Endothelial cell of umbilical vein (primary cell): ENCODE measurements at regions of chr11 and their contacts with region 1.

Region 1: DNA sequence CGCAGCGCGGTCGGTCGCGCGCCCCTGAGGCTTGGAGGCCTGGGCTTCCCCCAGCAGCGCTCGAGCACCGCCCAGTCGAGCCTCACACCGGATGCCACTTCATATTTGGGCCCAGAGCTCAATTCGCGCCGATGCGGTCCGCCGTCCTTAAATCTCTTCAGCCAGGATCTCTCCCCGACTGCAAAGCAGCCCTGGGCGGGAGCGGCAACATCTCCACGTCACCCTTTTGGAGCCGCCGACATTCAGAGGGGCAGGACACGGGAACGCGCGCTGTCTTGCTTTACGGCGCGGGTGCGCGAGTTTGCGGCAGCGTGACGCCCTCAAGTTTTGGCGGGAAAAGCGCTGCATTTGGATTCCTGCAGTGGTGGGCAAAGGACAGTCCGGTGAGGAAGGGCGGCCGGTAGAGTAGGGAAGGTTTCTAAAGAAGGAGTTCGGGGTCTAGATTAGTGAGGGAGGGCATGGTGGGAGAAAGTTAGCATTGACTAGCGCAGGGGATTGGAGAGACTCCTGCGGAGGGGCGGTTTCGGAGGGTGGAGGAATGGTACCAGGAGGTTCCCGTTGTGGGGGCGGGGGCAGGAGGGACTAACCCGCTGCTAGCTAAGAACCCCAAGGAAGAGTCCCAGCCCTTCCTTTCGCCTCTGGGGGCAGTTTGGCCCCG is 796 bp downstream of the CHEK1 start:
- DNase-seq: peak; percentile 91
- H3K4me3 ChIP-seq: peak overlapping the region; percentile 24 to 91 (median 60)
- H3K27ac ChIP-seq: peak overlapping the region; percentile 49
- H3K4me1 ChIP-seq: peaks cover 27% of the 10 kb centered on the region
- H3K27me3 ChIP-seq: no peaks in the 10 kb centered on the region
- CTCF ChIP-seq: no peak
- POLR2A ChIP-seq: peak; percentile 71

Region 2: DNA sequence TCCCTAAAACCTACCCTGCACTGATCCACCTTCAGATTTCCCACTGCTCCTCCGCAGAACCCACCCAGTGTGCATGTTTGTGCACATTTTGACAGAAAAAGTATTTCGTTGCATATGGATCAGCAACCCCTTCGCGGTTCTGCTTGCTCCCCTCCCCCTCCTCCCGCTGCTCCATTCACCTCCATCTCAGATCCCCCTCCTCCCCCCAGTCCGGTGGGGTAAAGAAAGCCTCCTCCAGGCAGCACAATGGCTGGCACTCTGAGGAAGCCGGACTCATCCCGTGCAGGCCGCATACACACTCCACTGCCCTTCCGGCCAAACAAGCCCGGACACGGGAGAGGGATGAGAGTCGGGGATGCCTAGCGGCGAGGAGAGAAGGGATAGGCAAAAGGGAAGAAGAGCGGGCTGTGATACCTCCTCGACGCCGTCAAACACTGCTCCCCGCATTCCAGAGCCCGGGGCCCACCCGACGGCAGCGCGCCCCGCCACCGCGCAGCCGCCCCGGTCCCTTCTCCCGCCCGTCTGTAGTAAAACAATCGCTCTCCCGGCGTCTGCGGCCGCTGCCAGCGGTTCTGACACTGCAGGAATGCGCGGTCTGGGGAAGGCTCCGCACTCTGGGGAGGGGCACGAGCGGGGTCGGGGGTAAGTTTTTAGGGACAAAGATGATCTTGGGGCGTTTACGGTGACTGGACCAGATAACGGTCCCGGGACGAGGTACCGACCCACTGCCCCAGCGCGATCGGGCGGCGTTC is 130.6 kb before region 1 on chr11:
- CTCF ChIA-PET with region 1: no interaction called
- POLR2A ChIA-PET with region 1: no interaction called
- dilution Hi-C with region 1: no loop called
- intact Hi-C with region 1: loop called (anchors 5 kb)
- DNase-seq: peak; percentile 61
- H3K4me3 ChIP-seq: peak overlapping the region; percentile 52 to 73 (median 62)
- H3K27ac ChIP-seq: no peak overlapping the region
- H3K4me1 ChIP-seq: peaks cover 9% of the 10 kb centered on the region
- H3K27me3 ChIP-seq: peaks cover 0 to 2% of the 10 kb centered on the region in 2 experiments
- CTCF ChIP-seq: no peak
- POLR2A ChIP-seq: no peak

Region 3: DNA sequence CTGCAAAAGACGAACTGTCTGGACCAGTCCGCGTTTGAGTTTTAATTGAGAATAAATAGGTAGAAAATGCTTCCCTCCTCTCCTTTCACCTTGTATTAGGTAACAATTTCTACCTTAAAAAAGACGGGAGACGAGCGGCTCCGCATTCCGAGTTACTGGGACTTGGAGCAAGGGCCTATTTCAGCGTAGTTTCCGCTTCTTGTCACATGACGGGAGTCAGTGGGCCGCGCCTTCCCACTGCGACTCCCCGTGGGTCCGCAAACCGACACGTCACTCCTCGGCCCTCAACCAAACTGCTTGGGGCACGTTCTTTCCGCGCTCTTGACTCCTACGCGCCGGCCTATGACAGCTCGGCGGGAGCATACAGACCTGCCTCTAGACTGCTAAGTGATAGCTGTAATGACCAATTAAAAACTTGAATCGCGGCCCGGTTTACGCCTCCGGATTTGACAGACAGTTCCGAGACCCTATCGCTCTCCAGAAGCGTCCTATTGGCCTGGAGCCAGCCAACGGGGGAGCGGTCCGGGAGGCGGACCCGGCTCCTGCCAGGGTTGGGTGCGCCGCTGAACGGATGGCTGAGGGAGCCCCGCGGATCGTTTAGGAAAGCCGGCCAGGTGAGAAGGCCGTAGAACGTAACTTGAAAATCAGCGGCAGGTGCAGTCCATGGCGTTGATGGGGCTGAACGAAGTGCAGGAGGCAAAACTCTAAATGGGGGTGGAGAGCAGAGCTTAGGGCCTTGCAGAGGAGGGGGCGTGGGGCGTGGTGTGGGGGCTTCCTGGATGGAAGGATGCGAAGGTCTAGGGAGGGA is 33.2 kb before region 1 on chr11 and contains the start of gene STT3A:
- CTCF ChIA-PET with region 1: no interaction called
- POLR2A ChIA-PET with region 1: interaction called, 8 read pairs
- dilution Hi-C with region 1: no loop called
- intact Hi-C with region 1: loop called (anchors 1 kb)
- DNase-seq: peak; percentile 100
- H3K4me3 ChIP-seq: peak within 1 kb of the TSS; percentile 63 to 96 (median 79)
- H3K27ac ChIP-seq: peak within 1 kb of the TSS; percentile 79
- H3K4me1 ChIP-seq: peaks cover 17% of the 10 kb centered on the region
- H3K27me3 ChIP-seq: no peaks in the 10 kb centered on the region
- CTCF ChIP-seq: no peak
- POLR2A ChIP-seq: peak; percentile 92
- total RNA-seq, gene STT3A: 216 and 236 TPM in 2 replicates

Region 4: DNA sequence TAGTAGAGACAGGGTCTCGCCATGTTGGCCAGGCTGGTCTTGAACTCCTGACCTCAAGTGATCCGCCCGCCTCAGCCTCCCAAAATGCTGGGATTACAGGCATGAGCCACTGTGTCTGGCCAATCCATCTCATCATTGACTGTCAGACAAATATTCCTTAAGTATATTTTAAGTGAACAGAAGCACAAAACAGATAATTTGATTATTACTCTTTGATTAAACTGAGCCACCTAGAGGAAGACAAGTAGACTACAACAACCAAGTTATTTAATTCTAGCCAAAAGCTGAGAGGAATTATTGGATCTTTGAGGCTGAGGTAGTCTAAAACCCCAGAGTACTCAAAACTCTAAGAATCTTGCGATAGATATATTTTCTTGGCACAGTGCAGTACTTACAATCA is 53.6 kb after region 1 on chr11:
- CTCF ChIA-PET with region 1: interaction called, 44 read pairs
- POLR2A ChIA-PET with region 1: no interaction called
- dilution Hi-C with region 1: no loop called
- intact Hi-C with region 1: loop called (anchors 1 kb)
- DNase-seq: peak; percentile 30
- H3K4me3 ChIP-seq: no peak overlapping the region
- H3K27ac ChIP-seq: no peak overlapping the region
- H3K4me1 ChIP-seq: peaks cover 12% of the 10 kb centered on the region
- H3K27me3 ChIP-seq: no peaks in the 10 kb centered on the region
- CTCF ChIP-seq: peak in 1 of 2 donors; percentile 18
- POLR2A ChIP-seq: no peak

Region 5: DNA sequence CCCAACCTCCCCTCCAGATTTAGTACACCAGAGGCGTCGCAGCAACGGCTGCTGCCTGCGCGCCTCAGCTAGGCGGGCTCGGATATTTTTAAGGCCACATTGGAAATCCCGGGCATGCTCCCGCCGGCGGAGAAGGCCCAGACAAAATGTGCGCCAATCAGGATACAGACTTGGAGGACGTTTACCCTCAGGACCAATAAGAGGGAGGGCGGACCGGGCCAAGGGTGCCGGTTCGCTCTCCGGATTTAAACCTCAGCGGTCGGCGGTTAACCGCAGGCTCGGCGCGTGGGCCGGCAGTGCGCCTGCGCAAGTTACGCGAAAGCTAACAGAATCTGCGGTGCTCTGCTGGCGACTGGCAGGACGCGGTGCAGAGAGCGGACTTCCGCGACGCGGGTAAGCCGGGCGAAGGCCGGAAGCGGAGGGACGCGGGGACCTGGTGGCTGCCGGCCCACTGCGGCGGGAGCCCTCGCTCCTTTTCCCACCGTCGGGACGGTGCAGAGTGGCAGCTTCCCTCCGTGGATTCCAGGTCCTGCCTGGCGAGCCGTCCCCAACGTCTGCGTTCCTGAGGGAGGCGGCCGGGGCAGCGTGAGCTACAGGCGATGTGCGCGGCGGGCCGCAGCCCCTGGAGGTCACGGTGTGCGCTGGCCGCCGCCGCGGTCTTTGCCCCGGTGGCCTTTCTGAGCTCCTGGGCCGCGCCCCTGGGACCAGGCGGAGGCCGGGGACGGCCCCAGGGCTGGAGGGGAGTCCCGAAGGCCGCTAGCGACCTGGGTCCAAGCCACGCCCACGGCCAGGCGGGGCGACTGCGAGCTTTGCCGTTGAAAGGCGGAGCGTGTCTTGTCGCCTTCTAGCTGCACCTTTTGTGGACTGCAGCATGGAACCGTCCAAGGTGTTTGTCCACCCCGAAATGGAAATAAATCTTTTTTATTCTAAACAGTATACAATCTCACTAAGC is 261.9 kb after region 1 on chr11 and contains the start of gene HYLS1:
- CTCF ChIA-PET with region 1: interaction called, 4 read pairs
- POLR2A ChIA-PET with region 1: no interaction called
- dilution Hi-C with region 1: no loop called
- intact Hi-C with region 1: loop called (anchors 1 kb)
- DNase-seq: peak; percentile 99
- H3K4me3 ChIP-seq: peak within 1 kb of the TSS; percentile 36 to 84 (median 73)
- H3K27ac ChIP-seq: peak within 1 kb of the TSS; percentile 76
- H3K4me1 ChIP-seq: peaks cover 30% of the 10 kb centered on the region
- H3K27me3 ChIP-seq: no peaks in the 10 kb centered on the region
- CTCF ChIP-seq: peak in 1 of 2 donors; percentile 22
- POLR2A ChIP-seq: peak; percentile 91
- total RNA-seq, gene HYLS1: 9.4 and 12.6 TPM in 2 replicates